Activated CD8-positive, alpha-beta memory T cell treated with anti-CD3 and anti-CD28 coated beads, Interleukin-2, amount 10 ng/mL, durations not matched to agents 7 days and 5 days (primary cell): ENCODE measurements at regions of chr5 and their contacts with region 1.

Region 1: GRCh38 chr5:36728697-36729543 is 122.5 kb downstream of the SLC1A3 start:
- DNase-seq: no peak
- ATAC-seq: peak; percentile 66
- H3K4me3 Mint-ChIP-seq: no peak overlapping the region
- H3K27ac Mint-ChIP-seq: no peak overlapping the region
- H3K4me1 Mint-ChIP-seq: peaks cover 7% of the 10 kb centered on the region
- H3K27me3 Mint-ChIP-seq: peaks cover 9% of the 10 kb centered on the region

Region 2: DNA sequence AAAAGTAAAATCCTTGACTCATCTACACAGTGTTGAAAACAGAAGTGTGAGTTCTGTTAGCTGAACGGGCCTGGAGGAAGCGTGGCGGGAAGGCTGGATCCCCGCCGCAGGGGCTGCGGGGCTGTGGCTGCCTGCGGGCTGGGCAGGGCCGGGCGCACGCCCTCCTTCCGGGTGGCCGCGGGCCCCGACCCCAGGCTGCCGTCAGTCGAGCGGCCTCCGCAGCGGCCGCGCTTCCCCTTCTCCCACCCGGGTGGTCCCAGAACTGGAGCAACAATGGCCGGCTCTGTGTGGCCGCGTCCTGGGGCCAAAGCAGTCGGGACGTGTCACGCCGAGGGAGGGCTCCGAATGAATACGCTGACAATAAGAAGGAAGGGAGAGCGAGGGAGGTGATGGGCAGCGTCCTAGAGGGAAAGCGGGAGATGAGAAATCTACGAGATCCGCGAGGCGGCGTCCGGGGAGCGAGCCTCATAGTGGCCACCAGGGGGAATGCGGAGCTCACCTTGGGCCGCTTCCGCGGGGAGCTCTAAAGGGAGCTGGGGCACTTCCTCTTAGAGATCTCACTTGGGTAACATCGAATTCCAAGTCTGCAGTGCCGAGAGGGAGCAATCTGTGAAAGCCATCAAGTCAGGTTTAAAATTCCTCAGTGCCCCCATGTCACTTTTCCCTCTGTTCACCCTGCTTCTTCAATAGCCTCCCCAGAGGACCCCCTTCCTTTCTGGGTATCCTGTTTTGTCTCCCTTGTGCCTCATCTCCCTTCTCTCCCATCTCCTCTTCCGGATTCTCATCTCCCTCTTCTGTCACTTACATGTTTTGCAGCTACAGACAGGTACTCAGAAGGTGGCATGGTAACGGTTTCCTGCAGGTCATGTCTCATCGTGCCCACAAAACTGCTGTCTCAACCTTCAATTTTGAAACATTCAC is 38.6 kb before region 1 on chr5:
- CTCF ChIA-PET with region 1: interaction called, 13 read pairs
- DNase-seq: peak; percentile 77
- ATAC-seq: peak; percentile 96
- H3K4me3 Mint-ChIP-seq: peak overlapping the region; percentile 77
- H3K27ac Mint-ChIP-seq: no peak overlapping the region
- H3K4me1 Mint-ChIP-seq: peaks cover 9% of the 10 kb centered on the region
- H3K27me3 Mint-ChIP-seq: peaks cover 26% of the 10 kb centered on the region

Region 3: DNA sequence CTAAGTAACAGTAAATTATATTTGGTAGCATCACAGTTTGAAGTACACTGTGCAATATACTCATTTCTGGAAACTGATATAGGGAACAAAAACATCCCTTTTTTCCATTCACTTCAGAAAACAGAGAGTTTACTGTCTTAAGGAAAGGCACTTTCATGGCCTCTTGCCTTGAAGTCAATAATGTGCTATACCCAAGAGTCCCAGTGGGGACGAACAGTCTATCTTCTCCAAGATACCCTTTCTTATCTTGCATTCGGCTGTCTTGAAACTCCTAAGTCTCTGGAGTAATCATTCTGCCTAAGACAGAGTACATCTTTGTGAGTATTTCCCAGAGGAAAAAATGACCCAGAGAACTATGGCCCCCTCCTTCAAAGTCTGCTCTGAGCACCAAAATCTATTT is 15.4 kb before region 1 on chr5:
- CTCF ChIA-PET with region 1: no interaction called
- DNase-seq: no peak
- ATAC-seq: no peak
- H3K4me3 Mint-ChIP-seq: no peak overlapping the region
- H3K27ac Mint-ChIP-seq: no peak overlapping the region
- H3K4me1 Mint-ChIP-seq: no peaks in the 10 kb centered on the region
- H3K27me3 Mint-ChIP-seq: peaks cover 4% of the 10 kb centered on the region

Region 4: DNA sequence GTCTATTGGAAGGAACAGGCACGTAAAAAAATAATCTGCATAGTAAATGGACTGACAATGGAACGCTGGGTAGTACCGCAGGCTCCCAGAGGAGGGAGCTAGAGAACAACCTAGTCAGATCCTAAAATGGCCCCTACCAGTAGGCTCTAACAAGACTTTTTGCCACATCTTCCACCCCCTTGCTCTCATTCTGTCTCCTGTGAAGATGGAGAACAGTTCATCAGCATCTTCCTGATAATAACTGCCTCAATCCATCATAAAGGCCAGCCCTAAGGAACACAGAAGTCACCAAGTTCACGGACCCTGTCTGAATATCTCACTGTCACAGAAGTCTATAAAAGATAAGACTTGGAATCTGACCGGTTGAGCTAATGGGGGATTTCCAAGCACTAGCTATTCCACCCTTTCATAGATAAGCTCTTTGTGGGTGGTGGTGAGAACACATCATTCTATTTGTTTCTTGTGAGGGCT is 10.9 kb after region 1 on chr5:
- CTCF ChIA-PET with region 1: interaction called, 10 read pairs
- DNase-seq: peak; percentile 80
- ATAC-seq: peak; percentile 77
- H3K4me3 Mint-ChIP-seq: no peak overlapping the region
- H3K27ac Mint-ChIP-seq: no peak overlapping the region
- H3K4me1 Mint-ChIP-seq: peaks cover 3% of the 10 kb centered on the region
- H3K27me3 Mint-ChIP-seq: peaks cover 36% of the 10 kb centered on the region

Region 5: DNA sequence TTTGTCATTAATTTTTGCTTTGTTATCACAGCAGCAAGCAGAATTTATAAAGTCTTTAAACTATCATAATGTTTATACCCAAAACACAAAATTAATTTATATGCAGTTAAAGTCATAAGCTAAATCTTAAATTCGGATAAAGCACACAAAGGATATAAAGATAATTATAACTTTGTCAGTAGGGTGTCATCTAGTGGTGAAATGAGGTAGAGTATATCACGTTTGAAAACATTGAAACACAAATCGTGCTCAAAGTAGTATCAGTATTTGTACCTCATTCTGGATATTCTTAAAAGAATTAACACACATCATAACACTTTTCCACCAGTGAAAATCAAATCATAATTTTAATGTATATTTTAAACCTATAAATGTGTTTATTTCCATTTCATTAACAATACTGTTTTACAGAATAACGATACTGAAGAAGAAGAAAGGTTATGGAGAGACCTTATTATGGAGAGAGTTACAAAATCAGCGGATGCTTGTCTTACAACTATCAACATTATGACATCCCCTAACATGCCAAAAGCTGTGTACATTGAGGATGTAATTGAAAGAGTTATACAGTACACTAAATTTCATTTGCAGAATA is 277.1 kb after region 1 on chr5:
- CTCF ChIA-PET with region 1: interaction called, 12 read pairs
- DNase-seq: no peak
- ATAC-seq: no peak
- H3K4me3 Mint-ChIP-seq: no peak overlapping the region
- H3K27ac Mint-ChIP-seq: no peak overlapping the region
- H3K4me1 Mint-ChIP-seq: no peaks in the 10 kb centered on the region
- H3K27me3 Mint-ChIP-seq: no peaks in the 10 kb centered on the region